Endothelial cell of umbilical vein (primary cell): ENCODE measurements at regions of chr4 and their contacts with region 1.

Region 1: GRCh38 chr4:161577579-161578301 is 586.1 kb downstream of the FSTL5 start:
- DNase-seq: peak; percentile 92
- H3K4me3 ChIP-seq: peak overlapping the region in 2 of 3 experiments; percentile 5 to 38
- H3K27ac ChIP-seq: peak overlapping the region; percentile 89
- H3K4me1 ChIP-seq: peaks cover 27% of the 10 kb centered on the region
- H3K27me3 ChIP-seq: no peaks in the 10 kb centered on the region
- CTCF ChIP-seq: no peak
- POLR2A ChIP-seq: no peak

Region 2: GRCh38 chr4:161448550-161449180 is 129.1 kb before region 1 on chr4:
- CTCF ChIA-PET with region 1: no interaction called
- POLR2A ChIA-PET with region 1: no interaction called
- dilution Hi-C with region 1: no loop called
- intact Hi-C with region 1: no loop called
- DNase-seq: peak; percentile 75
- H3K4me3 ChIP-seq: peak overlapping the region in 1 of 3 experiments; percentile 55
- H3K27ac ChIP-seq: no peak overlapping the region
- H3K4me1 ChIP-seq: peaks cover 2% of the 10 kb centered on the region
- H3K27me3 ChIP-seq: no peaks in the 10 kb centered on the region
- CTCF ChIP-seq: no peak
- POLR2A ChIP-seq: no peak

Region 3: GRCh38 chr4:161555689-161556660 is 21.8 kb before region 1 on chr4:
- CTCF ChIA-PET with region 1: no interaction called
- POLR2A ChIA-PET with region 1: no interaction called
- dilution Hi-C with region 1: no loop called
- intact Hi-C with region 1: loop called (anchors 1 kb)
- DNase-seq: peak; percentile 79
- H3K4me3 ChIP-seq: no peak overlapping the region
- H3K27ac ChIP-seq: peak overlapping the region; percentile 89
- H3K4me1 ChIP-seq: peaks cover 23% of the 10 kb centered on the region
- H3K27me3 ChIP-seq: no peaks in the 10 kb centered on the region
- CTCF ChIP-seq: no peak
- POLR2A ChIP-seq: no peak

Region 4: GRCh38 chr4:161680146-161680545 is 102.4 kb after region 1 on chr4:
- CTCF ChIA-PET with region 1: no interaction called
- POLR2A ChIA-PET with region 1: no interaction called
- dilution Hi-C with region 1: no loop called
- intact Hi-C with region 1: loop called (anchors 1 kb)
- DNase-seq: peak; percentile 85
- H3K4me3 ChIP-seq: no peak overlapping the region
- H3K27ac ChIP-seq: peak overlapping the region; percentile 73
- H3K4me1 ChIP-seq: peaks cover 24% of the 10 kb centered on the region
- H3K27me3 ChIP-seq: no peaks in the 10 kb centered on the region
- CTCF ChIP-seq: no peak
- POLR2A ChIP-seq: peak; percentile 26